ENCODE measurements at regions of chr6 and their contacts with region 1.

Region 1: DNA sequence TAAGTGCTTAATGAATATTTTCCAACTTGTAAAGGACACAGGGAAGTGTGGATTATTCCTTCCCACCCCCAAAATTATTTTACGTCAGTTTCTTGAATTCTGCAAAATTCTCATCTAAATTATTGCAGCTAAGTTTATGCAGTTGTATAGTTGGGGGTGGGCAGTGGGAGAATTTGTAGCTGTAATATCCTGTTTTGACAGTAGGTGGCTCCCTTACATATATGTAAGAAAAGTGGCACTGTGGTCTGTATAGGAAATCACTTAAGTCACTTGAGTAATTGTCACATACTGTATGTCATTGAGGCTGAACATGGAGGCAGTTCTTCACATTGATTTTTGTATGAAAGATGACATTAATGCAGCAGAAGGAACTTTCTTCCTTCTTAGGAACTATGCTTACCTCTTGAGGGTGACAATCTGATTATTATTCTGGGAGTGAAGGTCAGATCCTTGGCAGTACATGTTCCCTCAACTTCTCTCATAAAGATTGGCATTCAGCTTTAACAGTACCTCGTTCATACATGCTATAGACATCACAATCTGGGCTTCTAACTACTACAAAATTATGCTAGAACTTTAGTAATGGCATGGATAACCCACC is 14.7 kb upstream of the CFAP206 start:
- DNase-seq: no peak
- H3K4me3 ChIP-seq: no peak overlapping the region
- CTCF ChIP-seq: peak; percentile 38

Region 2: DNA sequence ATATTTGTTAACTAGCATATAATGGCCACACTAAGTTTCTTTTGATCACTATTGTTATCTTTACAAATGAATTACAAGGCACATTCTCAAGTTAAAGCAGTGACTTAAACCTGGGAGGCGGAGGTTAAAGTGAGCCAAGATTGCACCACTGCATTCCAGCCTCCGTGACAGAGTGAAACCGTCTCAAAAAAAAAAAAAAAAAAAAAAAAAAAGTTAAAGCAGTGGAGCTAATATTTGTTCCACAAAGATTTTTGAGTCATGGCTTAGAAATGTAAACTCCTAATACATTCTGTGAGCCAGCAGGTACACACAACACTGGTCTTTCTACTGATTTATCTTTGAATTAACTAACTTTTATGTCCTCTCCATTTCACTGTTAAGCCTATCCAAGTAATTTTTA is 677.4 kb before region 1 on chr6:
- CTCF ChIA-PET with region 1: no interaction called
- POLR2A ChIA-PET with region 1: no interaction called
- DNase-seq: no peak
- H3K4me3 ChIP-seq: no peak overlapping the region
- CTCF ChIP-seq: no peak

Region 3: DNA sequence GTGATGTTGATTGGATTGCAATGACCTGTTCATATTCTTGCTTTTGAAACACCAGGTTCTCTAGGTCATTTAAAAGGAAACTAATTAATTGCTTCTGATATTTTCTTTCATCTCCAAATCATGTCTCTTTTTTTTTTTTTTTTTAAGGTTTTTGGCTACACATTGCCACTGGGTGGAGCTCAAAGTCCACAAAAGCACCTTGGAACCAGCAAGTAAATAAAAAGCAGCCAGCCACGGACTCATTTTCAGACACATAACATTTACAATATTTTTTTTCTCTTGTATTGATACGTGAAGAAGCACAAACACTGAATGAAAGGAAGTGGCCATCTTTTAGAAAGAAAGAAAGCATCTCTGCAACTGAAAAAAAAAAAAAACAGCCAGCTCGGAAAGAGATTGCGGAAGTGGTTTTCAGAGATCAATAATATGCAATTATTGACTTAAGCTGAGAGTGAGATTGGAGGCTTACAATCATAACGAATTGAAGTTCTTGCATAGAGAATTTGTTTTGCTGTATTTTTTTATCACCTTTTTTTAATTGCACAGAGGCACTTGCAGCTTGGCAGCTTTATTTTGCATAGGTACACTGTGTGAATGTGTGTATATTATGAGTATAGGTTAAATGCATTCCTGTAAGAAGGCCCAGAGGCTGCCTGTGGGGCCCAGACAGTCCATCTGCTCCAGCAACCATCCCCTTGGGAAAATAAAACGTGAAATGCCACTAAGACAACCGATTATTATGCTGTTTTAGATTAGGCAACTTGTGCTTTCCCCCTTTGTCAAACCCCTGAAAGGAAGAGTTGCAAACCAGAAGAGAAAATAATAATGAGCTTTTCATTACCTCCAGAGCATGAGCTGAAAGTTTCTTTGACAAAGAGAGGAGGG is 326.4 kb before region 1 on chr6:
- CTCF ChIA-PET with region 1: interaction called, 25 read pairs
- POLR2A ChIA-PET with region 1: no interaction called
- DNase-seq: peak; percentile 21
- H3K4me3 ChIP-seq: no peak overlapping the region
- CTCF ChIP-seq: peak; percentile 39

Region 4: GRCh38 chr6:87139236-87139635 is 253.9 kb before region 1 on chr6:
- CTCF ChIA-PET with region 1: interaction called, 19 read pairs
- POLR2A ChIA-PET with region 1: no interaction called
- DNase-seq: no peak
- H3K4me3 ChIP-seq: no peak overlapping the region
- CTCF ChIP-seq: peak; percentile 43

Region 5: GRCh38 chr6:87154993-87155841 is 237.9 kb before region 1 on chr6 and contains the start of gene ZNF292:
- CTCF ChIA-PET with region 1: no interaction called
- POLR2A ChIA-PET with region 1: no interaction called
- DNase-seq: peak; percentile 79
- H3K4me3 ChIP-seq: peak within 1 kb of the TSS; percentile 80
- CTCF ChIP-seq: no peak

Region 6: GRCh38 chr6:87308970-87309369 is 84.2 kb before region 1 on chr6:
- CTCF ChIA-PET with region 1: no interaction called
- POLR2A ChIA-PET with region 1: no interaction called
- DNase-seq: no peak
- H3K4me3 ChIP-seq: no peak overlapping the region
- CTCF ChIP-seq: no peak

Region 7: DNA sequence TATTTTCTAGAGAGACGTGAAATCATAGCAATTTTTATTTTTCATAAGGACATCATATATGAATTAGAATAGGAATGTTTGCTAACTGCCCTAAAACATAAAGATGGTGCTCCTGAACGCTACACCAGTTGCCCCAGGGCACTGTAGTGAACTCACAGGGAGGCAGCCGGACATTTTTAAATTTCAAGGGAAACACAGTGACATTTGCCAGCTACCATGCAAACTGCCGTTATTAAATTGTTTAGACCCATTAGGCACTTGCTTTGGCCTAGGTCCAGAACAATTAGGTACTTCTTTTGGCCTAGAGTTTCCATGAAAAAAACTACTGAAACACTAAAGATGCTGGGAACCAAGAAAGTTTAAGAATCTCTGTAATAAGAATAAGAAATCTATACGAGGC is 10.3 kb before region 1 on chr6:
- CTCF ChIA-PET with region 1: interaction called, 14 read pairs
- POLR2A ChIA-PET with region 1: no interaction called
- DNase-seq: no peak
- H3K4me3 ChIP-seq: no peak overlapping the region
- CTCF ChIP-seq: no peak

Region 8: GRCh38 chr6:87407901-87408720 is 15.0 kb after region 1 on chr6 and contains the start of gene CFAP206:
- CTCF ChIA-PET with region 1: interaction called, 29 read pairs
- POLR2A ChIA-PET with region 1: interaction called, 3 read pairs
- DNase-seq: no peak
- H3K4me3 ChIP-seq: peak within 1 kb of the TSS; percentile 85
- CTCF ChIP-seq: peak; percentile 1

Measured in AG04449 (cell line).